PC-9 (cell line): ENCODE measurements at regions of chr17 and their contacts with region 1.

Region 1: DNA sequence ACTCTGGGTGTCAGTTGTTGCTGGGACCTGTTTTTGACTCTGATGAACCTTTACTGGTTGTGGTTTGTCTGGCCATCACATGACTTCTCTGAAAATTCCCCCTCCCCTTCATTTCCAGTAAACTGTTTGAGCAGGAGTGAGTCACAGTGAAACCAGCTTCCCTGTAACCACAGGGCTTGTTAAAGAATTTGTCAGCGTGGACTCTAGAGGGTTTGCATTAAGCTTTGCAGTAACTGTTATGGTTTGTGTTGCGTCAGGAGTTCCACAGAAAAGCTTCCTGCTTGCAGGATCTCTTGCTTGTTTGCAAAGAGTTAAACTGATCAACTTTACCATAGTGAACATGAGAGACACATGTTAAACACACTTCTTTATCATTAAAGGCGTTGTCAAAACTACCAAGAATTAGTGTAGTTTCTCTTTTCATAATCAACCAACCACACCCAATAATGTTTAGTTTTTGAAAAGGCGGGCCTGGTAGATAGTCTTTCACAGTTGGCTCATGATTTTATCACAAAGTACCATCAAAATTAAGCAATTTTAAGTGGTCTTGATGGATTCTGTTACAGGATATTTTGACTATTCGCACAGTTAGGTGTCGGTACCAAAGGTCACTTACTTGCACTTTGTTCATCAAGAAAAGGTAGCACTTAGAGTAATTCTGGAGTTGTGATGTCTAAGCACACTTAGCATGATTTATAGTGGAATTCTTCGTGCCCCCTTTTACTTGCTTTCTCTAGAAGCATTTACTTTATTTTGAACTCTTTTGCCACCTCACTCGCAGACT is 79.3 kb downstream of the VMP1 start:
- DNase-seq: peak; percentile 76 to 100
- H3K4me3 ChIP-seq: peak overlapping the region; percentile 47
- H3K27ac ChIP-seq: peak overlapping the region; percentile 98
- H3K4me1 ChIP-seq: peaks cover 76% of the 10 kb centered on the region
- H3K27me3 ChIP-seq: no peaks in the 10 kb centered on the region
- CTCF ChIP-seq: no peak

Region 2: DNA sequence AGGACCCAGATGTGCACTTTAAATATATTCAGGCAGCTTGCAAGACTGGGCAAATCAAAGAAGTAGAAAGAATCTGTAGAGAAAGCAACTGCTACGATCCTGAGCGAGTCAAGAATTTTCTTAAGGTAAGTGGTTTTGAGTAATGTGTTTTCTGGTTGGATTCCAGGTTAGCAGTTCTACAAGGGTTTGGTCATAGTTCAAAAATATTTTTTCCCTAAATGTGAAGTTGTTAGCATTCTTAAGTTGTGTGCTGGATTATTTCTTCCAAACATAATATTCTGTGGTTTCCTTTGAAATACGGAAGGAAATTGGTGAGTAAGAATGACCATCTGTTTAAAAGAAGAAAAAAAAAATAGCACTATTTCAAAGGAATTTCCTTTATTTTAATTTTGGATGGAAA is 117.9 kb before region 1 on chr17:
- CTCF ChIA-PET with region 1: no interaction called
- POLR2A ChIA-PET with region 1: interaction called, 18 read pairs
- intact Hi-C with region 1: no loop called
- DNase-seq: no peak
- H3K4me3 ChIP-seq: no peak overlapping the region
- H3K27ac ChIP-seq: peak overlapping the region; percentile 3
- H3K4me1 ChIP-seq: no peaks in the 10 kb centered on the region
- H3K27me3 ChIP-seq: no peaks in the 10 kb centered on the region
- CTCF ChIP-seq: no peak

Region 3: GRCh38 chr17:59769891-59770290 is 16.8 kb before region 1 on chr17:
- CTCF ChIA-PET with region 1: no interaction called
- POLR2A ChIA-PET with region 1: interaction called, 12 read pairs
- intact Hi-C with region 1: no loop called
- DNase-seq: peak in 1 of 2 experiments; percentile 67
- H3K4me3 ChIP-seq: no peak overlapping the region
- H3K27ac ChIP-seq: peak overlapping the region; percentile 75
- H3K4me1 ChIP-seq: peaks cover 22% of the 10 kb centered on the region
- H3K27me3 ChIP-seq: no peaks in the 10 kb centered on the region
- CTCF ChIP-seq: no peak

Region 4: DNA sequence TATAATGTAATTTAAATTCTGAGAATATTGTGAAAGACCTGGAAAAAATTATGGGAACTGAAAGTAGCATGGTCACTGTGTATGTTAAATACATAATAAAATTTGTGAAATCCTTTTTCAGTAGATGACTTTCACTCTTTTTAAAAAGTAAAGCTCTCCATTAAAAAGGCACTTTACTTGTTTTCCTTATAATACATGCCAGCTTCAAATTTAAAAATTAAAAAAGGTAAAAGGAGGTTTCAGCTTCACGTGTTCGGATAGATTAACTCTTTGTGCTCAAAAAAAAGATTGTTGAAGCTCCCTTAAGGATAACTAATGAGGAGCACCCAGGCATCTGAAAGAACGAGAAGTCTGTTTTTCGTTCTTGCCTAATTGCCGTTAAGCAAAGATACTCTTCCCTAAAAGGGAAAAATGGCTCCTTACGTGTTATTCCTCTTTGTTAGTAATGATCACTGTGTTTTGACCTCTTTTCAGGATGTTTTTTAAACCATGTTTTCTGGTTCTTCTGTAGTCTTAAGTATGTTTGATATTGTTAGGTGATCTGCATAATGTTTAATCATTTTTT is 18.3 kb after region 1 on chr17:
- CTCF ChIA-PET with region 1: no interaction called
- POLR2A ChIA-PET with region 1: no interaction called
- intact Hi-C with region 1: no loop called
- DNase-seq: no peak
- H3K4me3 ChIP-seq: no peak overlapping the region
- H3K27ac ChIP-seq: peak overlapping the region; percentile 30
- H3K4me1 ChIP-seq: peaks cover 38% of the 10 kb centered on the region
- H3K27me3 ChIP-seq: no peaks in the 10 kb centered on the region
- CTCF ChIP-seq: no peak

Region 5: GRCh38 chr17:59837308-59838051 is 50.8 kb after region 1 on chr17:
- CTCF ChIA-PET with region 1: interaction called, 3 read pairs
- POLR2A ChIA-PET with region 1: interaction called, 32 read pairs
- intact Hi-C with region 1: loop called (anchors 1 kb)
- DNase-seq: peak; percentile 75 to 100
- H3K4me3 ChIP-seq: peak overlapping the region; percentile 88
- H3K27ac ChIP-seq: peak overlapping the region; percentile 99
- H3K4me1 ChIP-seq: peaks cover 55% of the 10 kb centered on the region
- H3K27me3 ChIP-seq: no peaks in the 10 kb centered on the region
- CTCF ChIP-seq: no peak

Region 6: DNA sequence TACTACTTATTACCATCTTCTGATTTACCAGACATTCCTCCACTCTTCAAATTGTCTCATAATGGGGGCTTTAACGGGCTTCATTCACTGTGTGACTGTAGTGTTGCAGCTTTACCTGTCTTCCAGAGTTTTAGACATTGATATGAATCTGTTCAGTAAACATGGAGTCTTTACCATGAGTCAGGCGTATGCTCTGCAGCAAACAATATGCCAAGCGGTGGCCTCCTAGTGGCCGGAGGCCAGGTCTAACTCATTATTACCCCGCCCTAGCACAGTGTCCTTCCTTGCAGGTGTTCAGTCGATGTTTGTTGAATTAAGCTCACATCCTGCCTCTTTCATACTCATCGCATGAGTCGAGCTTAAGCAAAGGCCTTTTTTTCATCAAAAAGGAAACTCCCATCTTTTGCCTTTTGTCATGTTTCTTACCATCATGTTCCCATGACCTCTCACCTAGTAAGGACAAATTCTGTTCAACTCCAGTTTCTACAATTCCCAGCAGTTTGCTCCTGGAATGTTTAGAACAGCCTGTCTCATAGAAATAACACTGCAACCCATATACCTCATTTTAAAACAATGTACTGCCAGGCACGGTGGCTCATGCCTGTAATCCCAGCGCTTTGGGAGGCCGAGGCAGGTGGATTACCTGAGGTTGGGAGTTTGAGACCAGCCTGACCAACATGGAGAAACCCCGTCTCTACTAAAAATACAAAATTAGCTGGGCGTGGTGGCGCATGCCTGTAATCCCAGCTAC is 66.6 kb after region 1 on chr17:
- CTCF ChIA-PET with region 1: interaction called, 3 read pairs
- POLR2A ChIA-PET with region 1: interaction called, 8 read pairs
- intact Hi-C with region 1: loop called (anchors 1 kb)
- DNase-seq: peak; percentile 92 to 100
- H3K4me3 ChIP-seq: peak overlapping the region; percentile 12; the same call in 1 of the 2 replicates
- H3K27ac ChIP-seq: peak overlapping the region; percentile 98
- H3K4me1 ChIP-seq: peaks cover 91% of the 10 kb centered on the region
- H3K27me3 ChIP-seq: no peaks in the 10 kb centered on the region
- CTCF ChIP-seq: peak; percentile 83